ENCODE measurements at regions of chr5 and their contacts with region 1.

Region 1: DNA sequence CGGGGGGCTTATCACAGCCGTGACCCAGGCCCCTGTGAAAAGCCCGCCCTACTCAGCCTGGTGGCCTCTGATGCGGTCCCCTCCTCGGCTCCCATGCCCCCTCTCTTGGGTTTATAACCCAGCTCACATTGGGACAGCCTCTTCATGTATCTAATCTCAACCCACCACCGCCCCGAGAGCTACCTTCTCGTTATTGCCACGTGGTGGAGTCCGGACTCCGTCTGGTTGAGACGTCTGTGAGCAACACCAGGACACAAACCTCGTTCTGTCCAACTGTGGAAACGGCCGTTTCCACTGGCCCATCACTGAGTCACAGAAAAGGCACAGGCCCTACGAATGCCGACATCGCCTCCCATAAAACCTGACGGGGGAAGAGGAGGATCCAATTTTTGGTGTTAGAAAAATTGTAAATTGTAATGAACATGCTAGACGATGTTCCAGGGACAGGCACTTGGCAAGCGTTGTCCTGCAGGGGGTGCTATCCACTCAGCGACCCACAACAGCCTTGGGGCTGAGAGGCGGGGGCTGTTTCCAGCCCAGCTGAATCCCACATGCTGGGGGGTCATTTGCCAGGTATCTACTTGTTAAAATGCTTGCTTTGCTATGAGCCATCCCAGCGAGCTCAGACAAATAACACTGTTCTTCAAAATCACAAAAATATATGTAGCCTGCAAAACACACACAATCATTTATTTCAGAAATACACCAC is 37.3 kb upstream of the N4BP3 start:
- DNase-seq: peak in 1 of 2 experiments; percentile 74
- H3K4me3 ChIP-seq: no peak overlapping the region
- H3K27ac ChIP-seq: no peak overlapping the region
- H3K4me1 ChIP-seq: peaks cover 39% of the 10 kb centered on the region
- H3K27me3 ChIP-seq: peaks cover 19% of the 10 kb centered on the region
- CTCF ChIP-seq: peak; percentile 97

Region 2: GRCh38 chr5:178120868-178121357 is 44.9 kb after region 1 on chr5:
- CTCF ChIA-PET with region 1: interaction called, 6 read pairs
- POLR2A ChIA-PET with region 1: interaction called, 6 read pairs
- intact Hi-C with region 1: loop called (anchors 1 kb)
- DNase-seq: peak; percentile 46 to 57
- H3K4me3 ChIP-seq: no peak overlapping the region
- H3K27ac ChIP-seq: no peak overlapping the region
- H3K4me1 ChIP-seq: peaks cover 24% of the 10 kb centered on the region
- H3K27me3 ChIP-seq: no peaks in the 10 kb centered on the region
- CTCF ChIP-seq: peak; percentile 64

Region 3: GRCh38 chr5:178130604-178131485 is 54.9 kb after region 1 on chr5 and contains the start of gene RMND5B:
- CTCF ChIA-PET with region 1: no interaction called
- POLR2A ChIA-PET with region 1: interaction called, 5 read pairs
- intact Hi-C with region 1: loop called (anchors 1 kb)
- DNase-seq: peak; percentile 58 to 86
- H3K4me3 ChIP-seq: peak within 1 kb of the TSS; percentile 89
- H3K27ac ChIP-seq: peak within 1 kb of the TSS; percentile 85
- H3K4me1 ChIP-seq: peaks cover 19% of the 10 kb centered on the region
- H3K27me3 ChIP-seq: no peaks in the 10 kb centered on the region
- CTCF ChIP-seq: no peak
- total RNA-seq, gene RMND5B: 30.3 and 35.1 TPM in 2 replicates

Region 4: GRCh38 chr5:178146020-178146820 is 70.2 kb after region 1 on chr5:
- CTCF ChIA-PET with region 1: interaction called, 34 read pairs
- POLR2A ChIA-PET with region 1: no interaction called
- intact Hi-C with region 1: loop called (anchors 1 kb)
- DNase-seq: peak; percentile 81 to 98
- H3K4me3 ChIP-seq: no peak overlapping the region
- H3K27ac ChIP-seq: peak overlapping the region; percentile 97
- H3K4me1 ChIP-seq: peaks cover 32% of the 10 kb centered on the region
- H3K27me3 ChIP-seq: no peaks in the 10 kb centered on the region
- CTCF ChIP-seq: peak; percentile 95

Region 5: GRCh38 chr5:178163772-178164735 is 88.1 kb after region 1 on chr5:
- CTCF ChIA-PET with region 1: interaction called, 14 read pairs
- POLR2A ChIA-PET with region 1: no interaction called
- intact Hi-C with region 1: loop called (anchors 1 kb)
- DNase-seq: peak; percentile 70 to 89
- H3K4me3 ChIP-seq: no peak overlapping the region
- H3K27ac ChIP-seq: no peak overlapping the region
- H3K4me1 ChIP-seq: no peaks in the 10 kb centered on the region
- H3K27me3 ChIP-seq: no peaks in the 10 kb centered on the region; the same call in 1 of the 2 replicates
- CTCF ChIP-seq: peak; percentile 96

Region 6: GRCh38 chr5:178396796-178397720 is 321.1 kb after region 1 on chr5:
- CTCF ChIA-PET with region 1: no interaction called
- POLR2A ChIA-PET with region 1: no interaction called
- intact Hi-C with region 1: no loop called
- DNase-seq: no peak
- H3K4me3 ChIP-seq: no peak overlapping the region
- H3K27ac ChIP-seq: no peak overlapping the region
- H3K4me1 ChIP-seq: no peaks in the 10 kb centered on the region
- H3K27me3 ChIP-seq: peaks cover 78% of the 10 kb centered on the region
- CTCF ChIP-seq: no peak

Region 7: GRCh38 chr5:179355976-179356974 is 1280.3 kb after region 1 on chr5:
- CTCF ChIA-PET with region 1: no interaction called
- POLR2A ChIA-PET with region 1: no interaction called
- intact Hi-C with region 1: no loop called
- DNase-seq: no peak
- H3K4me3 ChIP-seq: no peak overlapping the region
- H3K27ac ChIP-seq: no peak overlapping the region
- H3K4me1 ChIP-seq: no peaks in the 10 kb centered on the region
- H3K27me3 ChIP-seq: peaks cover 75% of the 10 kb centered on the region
- CTCF ChIP-seq: no peak

Region 8: GRCh38 chr5:179923436-179923835 is 1847.4 kb after region 1 on chr5:
- CTCF ChIA-PET with region 1: interaction called, 10 read pairs
- POLR2A ChIA-PET with region 1: no interaction called
- intact Hi-C with region 1: no loop called
- DNase-seq: no peak
- H3K4me3 ChIP-seq: no peak overlapping the region
- H3K27ac ChIP-seq: no peak overlapping the region
- H3K4me1 ChIP-seq: no peaks in the 10 kb centered on the region
- H3K27me3 ChIP-seq: no peaks in the 10 kb centered on the region
- CTCF ChIP-seq: no peak

Measured in PC-9 (cell line).